Posterior vena cava (tissue), 2 donors: ENCODE measurements at regions of chr3 and their contacts with region 1.

Region 1: GRCh38 chr3:188286087-188286513 is 132.1 kb downstream of the LPP start:
- DNase-seq: no peak

Region 2: GRCh38 chr3:188272481-188273372 is 13.4 kb before region 1 on chr3:
- intact Hi-C with region 1: loop called in 1 of 2 experiments (anchors 1 kb)
- DNase-seq: no peak

Region 3: DNA sequence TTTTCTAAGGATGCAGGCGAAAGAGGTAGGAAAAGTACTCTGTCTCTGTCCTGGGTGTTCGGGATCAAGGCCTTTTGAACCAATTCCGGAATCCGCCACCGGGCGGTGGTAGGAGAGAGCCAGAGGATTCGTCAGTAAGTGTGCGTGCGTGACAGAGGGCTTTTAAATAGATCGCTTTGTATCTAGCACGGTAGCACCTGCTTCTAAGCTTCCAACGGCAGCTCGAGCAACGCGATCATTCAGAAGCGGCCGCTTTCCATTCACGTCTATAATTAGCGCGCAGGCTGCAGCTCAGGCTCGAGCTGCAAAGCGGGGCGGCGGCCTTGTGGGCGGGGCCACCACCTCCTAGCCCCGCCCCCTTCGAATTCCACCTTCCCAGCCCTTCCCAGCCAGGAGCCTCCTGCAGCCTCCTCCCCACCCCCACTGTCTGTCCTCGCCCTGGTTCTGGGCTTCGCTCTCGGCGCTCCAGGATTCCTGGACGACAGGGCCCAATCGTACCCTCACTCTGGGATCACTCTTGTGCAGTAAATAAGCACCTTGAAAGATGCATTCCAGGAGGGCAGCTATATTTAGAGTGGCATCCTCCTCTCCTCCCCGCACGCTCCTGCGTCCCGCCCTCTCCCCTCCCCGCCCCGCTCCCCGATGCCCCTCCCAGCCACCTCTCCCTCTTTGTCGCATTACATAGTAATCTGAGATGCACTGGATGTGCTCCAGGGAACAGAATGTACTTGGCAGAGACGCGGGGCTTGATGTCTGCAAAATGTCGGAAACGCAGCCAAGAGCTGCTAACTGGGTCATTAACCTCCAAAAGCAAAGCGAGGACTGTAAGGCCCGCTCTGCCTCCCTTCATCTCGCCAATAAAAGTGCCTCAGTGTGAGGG is 661.5 kb after region 1 on chr3:
- intact Hi-C with region 1: loop called in 1 of 2 experiments (anchors 10 kb)
- DNase-seq: peak; percentile 96